GM12878 (cell line): ENCODE measurements at regions of chr17 and their contacts with region 1.

Region 1: DNA sequence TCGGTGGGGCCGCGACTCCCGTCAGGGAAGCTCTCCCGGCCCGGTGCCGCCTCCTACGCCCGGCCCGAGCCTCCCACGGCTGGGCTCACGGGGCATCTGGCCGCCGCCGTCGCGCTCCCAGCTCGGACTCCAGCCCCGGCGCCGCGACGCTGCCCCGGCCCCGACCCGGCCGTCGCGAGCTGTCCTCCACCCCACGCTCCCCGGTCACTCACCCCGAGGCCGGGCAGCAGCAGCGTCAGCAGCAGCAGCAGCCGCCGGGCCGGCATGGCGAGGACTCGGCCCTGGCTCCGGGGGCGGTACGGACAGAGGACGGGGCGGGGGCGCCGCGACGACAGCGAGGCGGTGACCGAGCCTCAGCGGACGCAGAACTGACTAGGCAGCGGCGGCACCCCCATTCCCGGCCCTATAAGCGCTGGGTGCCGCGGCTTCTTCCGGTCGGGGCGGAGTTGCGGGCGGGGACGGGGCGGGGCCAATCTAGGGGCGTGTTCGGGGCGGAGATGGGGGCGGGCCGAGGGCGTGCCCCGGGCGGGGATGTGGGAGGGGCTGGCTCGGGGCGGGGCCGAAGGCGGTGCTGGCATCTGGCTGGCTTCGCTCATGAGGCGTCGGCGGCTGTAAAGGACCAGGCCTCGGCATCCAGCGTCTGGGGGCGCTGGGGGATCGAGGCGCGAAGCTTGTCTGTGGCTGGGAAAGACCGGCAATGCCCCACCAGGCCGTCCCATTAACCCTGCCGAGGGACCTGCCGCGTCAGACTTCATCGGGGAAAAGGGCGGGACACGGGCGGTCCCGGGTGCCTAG is at the start of gene ERN1:
- DNase-seq: peak; percentile 54
- ATAC-seq: peak; percentile 89
- H3K4me3 ChIP-seq: peak within 1 kb of the TSS; percentile 93
- H3K27ac ChIP-seq: peak within 1 kb of the TSS; percentile 83
- H3K4me1 ChIP-seq: peaks cover 32% of the 10 kb centered on the region
- H3K27me3 ChIP-seq: no peaks in the 10 kb centered on the region
- CTCF ChIP-seq: 0 out of 6 replicates have a peak, but pooled peaks of 1 of the 3 experiments have one; percentile 0
- EP300 ChIP-seq: no peak
- POLR2A ChIP-seq: peak; percentile 98
- RAD21 ChIP-seq: no peak
- polyA plus RNA-seq, gene ERN1: 2.6 to 3.4 TPM

Region 2: DNA sequence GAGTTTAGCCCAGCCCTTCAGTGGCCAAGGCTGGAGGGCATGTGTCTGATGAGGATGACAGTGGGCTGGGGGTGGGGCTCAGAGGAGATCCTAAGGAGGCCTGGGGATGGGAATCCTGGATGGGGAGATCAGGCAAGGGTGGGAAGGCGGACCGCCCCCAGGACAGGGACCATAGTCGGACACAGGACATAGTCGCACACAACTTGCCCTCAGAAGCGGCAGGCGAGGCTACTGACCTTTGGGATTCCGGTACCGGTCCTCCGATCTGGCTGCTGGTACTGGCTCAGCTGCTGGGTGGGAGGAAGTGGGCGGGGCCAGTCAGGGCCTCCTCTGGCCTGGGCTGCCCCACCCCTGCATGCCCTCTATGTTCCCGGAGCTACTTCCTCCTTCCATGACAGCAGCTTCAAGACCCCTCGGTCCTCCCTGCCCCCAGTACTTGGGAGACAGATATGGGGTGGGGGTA is 198.8 kb before region 1 on chr17:
- CTCF ChIA-PET with region 1: interaction called, 6 read pairs
- POLR2A ChIA-PET with region 1: interaction called, 9 read pairs
- RAD21 ChIA-PET with region 1: interaction called, 23 read pairs
- SMC1A ChIA-PET with region 1: interaction called, 6 read pairs
- in situ Hi-C with region 1: no loop called
- intact Hi-C with region 1: no loop called
- DNase-seq: no peak
- ATAC-seq: peak; percentile 80
- H3K4me3 ChIP-seq: peak overlapping the region; percentile 98
- H3K27ac ChIP-seq: peak overlapping the region; percentile 89
- H3K4me1 ChIP-seq: peaks cover 46% of the 10 kb centered on the region
- H3K27me3 ChIP-seq: no peaks in the 10 kb centered on the region
- CTCF ChIP-seq: no peak
- EP300 ChIP-seq: no peak
- POLR2A ChIP-seq: no peak
- RAD21 ChIP-seq: no peak

Region 3: DNA sequence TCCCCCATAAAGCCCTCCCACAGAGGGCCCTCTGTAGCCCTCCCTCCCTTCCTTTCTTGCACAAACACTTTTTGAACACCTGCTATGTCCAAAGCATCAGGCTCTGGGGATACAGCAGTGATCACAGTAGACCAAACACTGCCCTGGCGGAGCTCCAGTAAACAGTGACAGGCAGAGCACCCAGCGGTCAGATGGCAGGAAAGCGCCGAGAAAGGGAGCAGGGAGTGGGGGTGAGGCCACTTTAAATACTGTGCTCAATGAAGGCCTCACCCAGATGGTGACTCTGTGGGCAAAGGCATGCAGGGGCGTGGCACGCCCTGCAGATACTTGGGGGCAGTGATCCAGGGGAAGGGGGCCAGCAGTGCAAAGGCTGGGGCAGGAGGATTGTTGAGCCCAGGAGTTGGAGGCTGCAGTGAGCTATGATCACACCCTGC is 124.2 kb before region 1 on chr17:
- CTCF ChIA-PET with region 1: interaction called, 13 read pairs
- POLR2A ChIA-PET with region 1: interaction called, 3 read pairs
- RAD21 ChIA-PET with region 1: no interaction called
- SMC1A ChIA-PET with region 1: interaction called, 4 read pairs
- in situ Hi-C with region 1: no loop called
- intact Hi-C with region 1: no loop called
- DNase-seq: no peak
- ATAC-seq: no peak
- H3K4me3 ChIP-seq: no peak overlapping the region
- H3K27ac ChIP-seq: no peak overlapping the region
- H3K4me1 ChIP-seq: no peaks in the 10 kb centered on the region
- H3K27me3 ChIP-seq: no peaks in the 10 kb centered on the region
- CTCF ChIP-seq: no peak
- EP300 ChIP-seq: no peak
- POLR2A ChIP-seq: no peak
- RAD21 ChIP-seq: no peak

Region 4: DNA sequence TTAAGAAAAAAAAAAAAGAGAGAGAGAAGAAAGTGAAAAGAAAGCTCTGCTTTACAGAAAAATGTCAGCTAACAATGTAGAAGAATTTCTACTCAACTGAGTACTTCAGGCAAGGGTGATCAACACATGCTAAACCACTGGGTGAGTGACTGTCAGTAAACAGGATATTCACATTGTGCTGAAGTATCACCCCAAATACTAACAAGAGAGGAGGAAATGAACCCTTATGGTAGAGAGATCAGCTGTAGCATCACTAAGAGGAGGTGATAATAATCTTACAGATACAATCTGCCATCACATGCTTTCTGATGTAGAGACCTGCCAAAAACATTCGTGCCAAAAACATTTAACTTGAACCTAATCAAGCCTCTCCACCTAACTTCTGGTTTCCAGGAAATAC is 78.8 kb before region 1 on chr17:
- CTCF ChIA-PET with region 1: interaction called, 71 read pairs
- POLR2A ChIA-PET with region 1: interaction called, 5 read pairs
- RAD21 ChIA-PET with region 1: interaction called, 89 read pairs
- SMC1A ChIA-PET with region 1: interaction called, 53 read pairs
- in situ Hi-C with region 1: no loop called
- intact Hi-C with region 1: no loop called
- DNase-seq: no peak
- ATAC-seq: no peak
- H3K4me3 ChIP-seq: no peak overlapping the region
- H3K27ac ChIP-seq: no peak overlapping the region
- H3K4me1 ChIP-seq: peaks cover 5% of the 10 kb centered on the region
- H3K27me3 ChIP-seq: no peaks in the 10 kb centered on the region
- CTCF ChIP-seq: no peak
- EP300 ChIP-seq: no peak
- POLR2A ChIP-seq: no peak
- RAD21 ChIP-seq: no peak

Region 5: DNA sequence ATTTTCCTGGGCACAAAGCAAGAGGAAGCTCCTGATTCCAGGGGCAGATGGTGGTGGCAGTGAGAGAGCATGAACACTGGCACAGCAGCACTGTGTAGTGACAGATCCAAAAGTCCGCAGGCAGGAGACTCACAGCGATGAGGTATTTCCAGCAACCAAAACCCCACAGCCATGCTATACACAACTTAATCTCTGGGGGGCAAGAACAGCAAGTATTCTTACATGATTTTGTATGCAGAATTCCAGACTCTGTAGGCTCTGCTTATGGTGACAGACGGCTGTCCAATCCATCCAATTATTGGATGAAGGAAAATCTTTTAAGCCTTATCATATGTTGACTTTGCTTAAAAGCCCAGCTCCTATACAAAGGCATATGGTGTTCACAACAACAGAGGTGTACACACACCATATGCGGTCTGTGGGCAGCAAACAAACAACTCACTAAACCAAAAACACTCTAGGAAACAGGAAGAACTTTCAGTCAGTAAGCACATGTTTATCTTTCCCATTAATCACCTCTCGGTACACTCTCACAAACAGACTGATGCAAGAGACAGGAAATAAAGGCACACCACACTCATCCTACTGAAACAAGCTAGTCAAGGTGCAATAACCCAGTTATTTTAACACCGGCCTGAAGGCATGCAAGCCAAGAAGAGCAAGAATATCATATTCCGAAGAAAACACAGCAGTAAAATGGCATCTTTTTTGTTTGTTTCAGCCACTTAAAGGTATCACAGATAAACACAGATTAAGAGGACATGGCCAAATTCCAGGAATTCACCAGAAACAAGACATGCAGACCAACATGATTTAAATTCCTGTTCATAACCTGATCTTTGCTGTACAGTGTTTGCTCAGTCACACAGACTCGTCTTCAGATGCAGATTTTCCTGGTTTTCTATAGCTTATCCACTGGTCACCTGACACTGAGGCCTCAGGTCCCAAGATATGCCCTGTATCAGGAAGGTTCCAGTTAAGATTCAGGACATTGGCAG is 47.9 kb before region 1 on chr17:
- CTCF ChIA-PET with region 1: interaction called, 82 read pairs
- POLR2A ChIA-PET with region 1: interaction called, 37 read pairs
- RAD21 ChIA-PET with region 1: interaction called, 3 read pairs
- SMC1A ChIA-PET with region 1: interaction called, 17 read pairs
- in situ Hi-C with region 1: no loop called
- intact Hi-C with region 1: no loop called
- DNase-seq: peak; percentile 72
- ATAC-seq: peak; percentile 91
- H3K4me3 ChIP-seq: no peak overlapping the region
- H3K27ac ChIP-seq: peak overlapping the region; percentile 48
- H3K4me1 ChIP-seq: peaks cover 14% of the 10 kb centered on the region
- H3K27me3 ChIP-seq: no peaks in the 10 kb centered on the region
- CTCF ChIP-seq: no peak
- EP300 ChIP-seq: 0 out of 4 replicates have a peak, but pooled peaks of 1 of the 2 experiments have one; percentile 28
- POLR2A ChIP-seq: no peak
- RAD21 ChIP-seq: no peak

Region 6: GRCh38 chr17:64281962-64282727 is 152.2 kb after region 1 on chr17:
- CTCF ChIA-PET with region 1: interaction called, 40 read pairs
- POLR2A ChIA-PET with region 1: interaction called, 4 read pairs
- RAD21 ChIA-PET with region 1: interaction called, 10 read pairs
- SMC1A ChIA-PET with region 1: interaction called, 11 read pairs
- in situ Hi-C with region 1: no loop called
- intact Hi-C with region 1: no loop called
- DNase-seq: peak; percentile 17
- ATAC-seq: peak; percentile 63
- H3K4me3 ChIP-seq: no peak overlapping the region
- H3K27ac ChIP-seq: no peak overlapping the region
- H3K4me1 ChIP-seq: peaks cover 12% of the 10 kb centered on the region
- H3K27me3 ChIP-seq: no peaks in the 10 kb centered on the region; a peak in 1 of 4 replicates
- CTCF ChIP-seq: peak; percentile 70 to 74 (median 74)
- EP300 ChIP-seq: no peak
- POLR2A ChIP-seq: no peak
- RAD21 ChIP-seq: peak; percentile 97

Region 7: GRCh38 chr17:64300699-64300965 is 170.7 kb after region 1 on chr17:
- CTCF ChIA-PET with region 1: no interaction called
- POLR2A ChIA-PET with region 1: no interaction called
- RAD21 ChIA-PET with region 1: no interaction called
- SMC1A ChIA-PET with region 1: no interaction called
- in situ Hi-C with region 1: no loop called
- intact Hi-C with region 1: no loop called
- DNase-seq: no peak
- ATAC-seq: no peak
- H3K4me3 ChIP-seq: no peak overlapping the region
- H3K27ac ChIP-seq: no peak overlapping the region
- H3K4me1 ChIP-seq: no peaks in the 10 kb centered on the region
- H3K27me3 ChIP-seq: peaks cover 0 to 3% of the 10 kb centered on the region in 2 experiments; a peak in 1 of 4 replicates
- CTCF ChIP-seq: no peak
- EP300 ChIP-seq: no peak
- POLR2A ChIP-seq: no peak
- RAD21 ChIP-seq: no peak

Region 8: DNA sequence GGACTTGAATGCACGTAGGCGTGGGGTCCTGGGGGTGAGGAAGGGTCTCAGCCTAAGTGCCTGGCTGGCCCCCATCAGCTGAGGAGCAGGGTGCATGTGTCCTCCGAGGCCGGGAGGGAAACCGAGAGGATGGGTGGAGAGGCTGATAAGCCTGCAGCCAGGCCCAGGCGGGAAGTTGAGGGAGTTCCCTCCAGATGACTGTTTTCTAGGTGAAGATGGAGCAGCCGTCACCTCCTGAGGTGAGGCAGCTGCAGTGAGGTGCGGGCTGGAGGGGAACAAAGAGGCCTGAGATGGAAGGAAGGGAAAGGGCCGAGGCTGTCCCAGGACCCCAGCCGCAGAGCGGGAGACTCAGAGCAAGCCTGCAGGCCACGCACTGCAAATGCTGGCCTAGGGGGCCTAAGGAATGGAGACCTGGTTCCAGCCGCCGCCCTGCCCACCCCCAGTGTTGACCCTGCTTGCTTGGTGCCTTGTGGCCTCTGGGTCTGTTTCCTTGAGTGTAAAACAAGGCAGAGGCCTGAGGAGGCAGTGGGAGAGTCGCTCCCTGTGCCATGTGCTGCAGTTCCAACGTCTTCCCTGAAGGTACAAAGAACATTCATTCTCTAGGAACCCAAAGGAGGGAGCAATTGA is 257.7 kb after region 1 on chr17:
- CTCF ChIA-PET with region 1: no interaction called
- POLR2A ChIA-PET with region 1: no interaction called
- RAD21 ChIA-PET with region 1: no interaction called
- SMC1A ChIA-PET with region 1: no interaction called
- in situ Hi-C with region 1: no loop called
- intact Hi-C with region 1: no loop called
- DNase-seq: no peak
- ATAC-seq: no peak
- H3K4me3 ChIP-seq: no peak overlapping the region
- H3K27ac ChIP-seq: no peak overlapping the region
- H3K4me1 ChIP-seq: peaks cover 11% of the 10 kb centered on the region
- H3K27me3 ChIP-seq: no peaks in the 10 kb centered on the region
- CTCF ChIP-seq: no peak
- EP300 ChIP-seq: no peak
- POLR2A ChIP-seq: no peak
- RAD21 ChIP-seq: no peak